Activated B cell treated with CpG ODN at 0.5 μM for 24 hours (primary cell): ENCODE measurements at regions of chr19 and their contacts with region 1.

Region 1: GRCh38 chr19:11924886-11925650 is at the start of gene ZNF700:
- DNase-seq: peak; percentile 86
- ATAC-seq: peak; percentile 87
- H3K4me3 Mint-ChIP-seq: peak within 1 kb of the TSS; percentile 99
- H3K27ac Mint-ChIP-seq: peak within 1 kb of the TSS; percentile 98
- H3K4me1 Mint-ChIP-seq: peaks cover 44% of the 10 kb centered on the region
- H3K27me3 Mint-ChIP-seq: no peaks in the 10 kb centered on the region
- CTCF ChIP-seq: no peak
- total RNA-seq, gene ZNF700: 24.5 and 33.1 TPM in 2 replicates

Region 2: DNA sequence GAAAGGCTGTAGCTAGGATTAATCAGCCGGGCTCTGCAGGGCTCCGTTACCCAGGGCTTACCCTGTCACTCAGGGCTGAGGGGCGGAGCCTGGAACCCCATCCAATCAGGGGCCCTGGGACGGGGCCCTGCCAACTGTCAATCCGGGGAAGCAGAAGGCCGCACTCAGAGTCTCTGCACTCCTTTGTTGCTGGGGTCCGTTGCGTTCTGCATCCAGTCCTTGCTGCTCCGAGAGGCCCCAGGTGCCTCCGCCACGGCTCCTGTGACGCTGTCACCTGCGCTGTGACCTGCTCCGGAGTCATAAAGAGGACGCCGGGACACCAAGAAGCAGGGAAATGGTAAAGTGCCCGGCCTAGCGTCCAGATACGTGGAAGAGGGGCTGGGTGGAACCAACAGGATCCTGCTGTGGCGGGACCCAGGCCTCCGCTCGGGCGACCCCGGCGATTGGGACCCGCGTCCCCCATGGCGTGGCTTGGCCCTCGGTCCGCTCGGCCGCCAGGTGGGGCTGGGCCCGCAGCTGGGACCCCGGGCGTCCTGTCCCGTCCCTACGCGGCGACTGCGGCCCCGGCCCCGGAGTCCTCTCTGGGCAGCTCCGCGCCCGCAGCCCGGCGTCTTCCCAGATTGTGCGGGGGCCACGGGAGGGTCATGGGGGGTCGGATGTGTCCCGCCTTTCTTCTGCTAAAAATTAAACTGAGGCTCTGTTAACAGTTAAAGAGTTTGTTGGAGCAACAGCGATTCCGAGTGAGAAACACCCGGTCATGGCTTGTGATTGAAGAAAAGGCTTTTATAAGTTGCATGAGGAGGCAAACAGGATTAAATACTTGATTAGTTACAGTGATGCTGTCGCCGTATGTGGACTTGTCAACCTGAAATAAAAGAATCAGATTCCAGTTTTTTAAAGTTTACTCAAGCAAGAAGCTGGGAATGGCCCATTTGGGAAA is 126.4 kb before region 1 on chr19 and contains the start of gene ZNF491:
- CTCF ChIA-PET with region 1: interaction called, 18 read pairs
- POLR2A ChIA-PET with region 1: interaction called, 7 read pairs
- intact Hi-C with region 1: loop called (anchors 1 kb)
- DNase-seq: peak; percentile 77
- ATAC-seq: peak; percentile 99
- H3K4me3 Mint-ChIP-seq: peak within 1 kb of the TSS; percentile 91
- H3K27ac Mint-ChIP-seq: peak within 1 kb of the TSS; percentile 71
- H3K4me1 Mint-ChIP-seq: peaks cover 25% of the 10 kb centered on the region
- H3K27me3 Mint-ChIP-seq: no peaks in the 10 kb centered on the region
- CTCF ChIP-seq: no peak
- total RNA-seq, gene ZNF491: 1.4 and 1.7 TPM in 2 replicates

Region 3: DNA sequence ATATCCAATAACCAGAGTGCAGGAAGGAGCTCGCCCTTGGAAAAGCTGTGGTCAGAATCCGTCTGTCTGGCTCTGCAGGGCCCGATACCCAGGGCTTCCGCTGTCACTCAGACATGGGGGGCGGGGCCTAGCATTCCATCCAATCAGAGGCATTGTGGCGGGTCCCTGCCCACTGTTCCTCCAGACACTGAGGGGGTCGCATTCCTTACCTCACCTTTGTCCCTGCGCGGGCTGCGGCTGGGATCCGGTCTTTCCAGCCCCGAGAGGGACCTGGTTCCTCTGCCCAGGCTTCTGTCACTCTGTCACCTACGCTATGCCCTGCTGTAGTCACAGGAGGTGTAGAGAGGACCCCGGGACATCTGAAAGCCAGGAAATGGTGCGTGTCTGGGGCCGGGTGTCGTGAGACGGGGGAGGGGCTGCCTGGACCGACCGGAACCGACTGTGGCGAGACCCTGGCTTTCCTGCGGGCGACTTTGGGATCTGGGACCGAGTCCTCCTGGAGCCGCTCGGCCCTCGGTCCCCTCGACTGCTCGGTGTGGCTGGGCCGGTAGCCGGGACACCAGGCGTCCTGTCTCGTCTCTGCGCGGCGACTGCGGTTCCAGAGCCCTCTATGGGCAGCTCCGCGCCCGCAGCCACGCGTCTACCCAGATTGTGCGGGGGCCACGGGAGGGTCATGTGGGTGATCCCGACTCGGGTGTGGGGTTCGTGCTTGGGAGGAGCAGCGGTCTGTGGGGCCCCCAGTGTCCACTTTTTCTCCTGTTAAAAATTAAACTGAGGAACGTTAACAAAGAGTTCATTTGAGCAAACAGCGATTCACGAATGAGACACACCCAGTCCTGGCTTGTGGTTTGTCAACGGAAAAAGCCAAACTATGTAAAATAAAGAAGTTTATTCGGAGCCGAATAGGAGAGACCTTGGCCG is 37.2 kb before region 1 on chr19 and contains the start of gene ZNF69:
- CTCF ChIA-PET with region 1: interaction called, 4 read pairs
- POLR2A ChIA-PET with region 1: interaction called, 3 read pairs
- intact Hi-C with region 1: loop called (anchors 1 kb)
- DNase-seq: peak; percentile 61
- ATAC-seq: peak; percentile 88
- H3K4me3 Mint-ChIP-seq: peak within 1 kb of the TSS; percentile 89
- H3K27ac Mint-ChIP-seq: no peak within 1 kb of the TSS
- H3K4me1 Mint-ChIP-seq: peaks cover 20% of the 10 kb centered on the region
- H3K27me3 Mint-ChIP-seq: no peaks in the 10 kb centered on the region
- CTCF ChIP-seq: no peak
- total RNA-seq, gene ZNF69: 2.1 and 2.3 TPM in 2 replicates

Region 4: GRCh38 chr19:12000152-12000981 is 75.3 kb after region 1 on chr19:
- CTCF ChIA-PET with region 1: interaction called, 7 read pairs
- POLR2A ChIA-PET with region 1: interaction called, 4 read pairs
- intact Hi-C with region 1: loop called (anchors 1 kb)
- DNase-seq: peak; percentile 23
- ATAC-seq: peak; percentile 84
- H3K4me3 Mint-ChIP-seq: peak overlapping the region; percentile 63
- H3K27ac Mint-ChIP-seq: peak overlapping the region; percentile 82
- H3K4me1 Mint-ChIP-seq: peaks cover 31% of the 10 kb centered on the region
- H3K27me3 Mint-ChIP-seq: no peaks in the 10 kb centered on the region
- CTCF ChIP-seq: no peak

Region 5: GRCh38 chr19:12064590-12065538 is 139.8 kb after region 1 on chr19 and contains the start of gene ZNF844:
- CTCF ChIA-PET with region 1: interaction called, 12 read pairs
- POLR2A ChIA-PET with region 1: interaction called, 12 read pairs
- intact Hi-C with region 1: no loop called
- DNase-seq: peak; percentile 81
- ATAC-seq: peak; percentile 95
- H3K4me3 Mint-ChIP-seq: peak within 1 kb of the TSS; percentile 92
- H3K27ac Mint-ChIP-seq: peak within 1 kb of the TSS; percentile 93
- H3K4me1 Mint-ChIP-seq: peaks cover 14% of the 10 kb centered on the region
- H3K27me3 Mint-ChIP-seq: no peaks in the 10 kb centered on the region
- CTCF ChIP-seq: no peak
- total RNA-seq, gene ZNF844: 24.8 and 27.7 TPM in 2 replicates

Region 6: GRCh38 chr19:12194827-12195731 is 270.0 kb after region 1 on chr19:
- CTCF ChIA-PET with region 1: no interaction called
- POLR2A ChIA-PET with region 1: no interaction called
- intact Hi-C with region 1: loop called (anchors 1 kb)
- DNase-seq: peak; percentile 69
- ATAC-seq: peak; percentile 97
- H3K4me3 Mint-ChIP-seq: peak overlapping the region; percentile 86
- H3K27ac Mint-ChIP-seq: peak overlapping the region; percentile 76
- H3K4me1 Mint-ChIP-seq: peaks cover 15% of the 10 kb centered on the region
- H3K27me3 Mint-ChIP-seq: no peaks in the 10 kb centered on the region
- CTCF ChIP-seq: no peak